Left ventricle myocardium superior (tissue), 1 donor: ENCODE measurements at regions of chr13 and their contacts with region 1.

Region 1: DNA sequence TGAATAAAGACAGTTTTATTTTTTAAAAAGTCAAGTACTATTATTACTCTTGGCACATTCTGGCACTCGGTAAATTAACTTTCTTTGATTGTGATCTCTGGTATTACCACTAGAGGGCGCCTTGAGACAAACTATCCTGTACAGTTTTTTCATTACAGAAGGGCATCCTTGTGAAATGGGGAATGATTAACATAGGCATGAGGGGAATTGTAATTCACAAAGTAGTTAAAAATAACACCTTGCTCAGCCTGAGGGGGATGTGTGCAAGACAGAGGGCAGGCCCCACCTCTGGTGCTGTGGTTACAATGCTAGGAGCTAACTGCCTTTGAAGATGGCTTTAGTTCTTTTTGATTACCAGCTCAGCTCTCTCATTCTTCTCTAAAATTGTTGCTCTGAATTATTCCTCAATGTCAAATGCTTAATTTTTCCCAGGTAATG is 24.2 kb upstream of the C1QTNF9B start:
- DNase-seq: no peak
- ATAC-seq: peak; percentile 33

Region 2: DNA sequence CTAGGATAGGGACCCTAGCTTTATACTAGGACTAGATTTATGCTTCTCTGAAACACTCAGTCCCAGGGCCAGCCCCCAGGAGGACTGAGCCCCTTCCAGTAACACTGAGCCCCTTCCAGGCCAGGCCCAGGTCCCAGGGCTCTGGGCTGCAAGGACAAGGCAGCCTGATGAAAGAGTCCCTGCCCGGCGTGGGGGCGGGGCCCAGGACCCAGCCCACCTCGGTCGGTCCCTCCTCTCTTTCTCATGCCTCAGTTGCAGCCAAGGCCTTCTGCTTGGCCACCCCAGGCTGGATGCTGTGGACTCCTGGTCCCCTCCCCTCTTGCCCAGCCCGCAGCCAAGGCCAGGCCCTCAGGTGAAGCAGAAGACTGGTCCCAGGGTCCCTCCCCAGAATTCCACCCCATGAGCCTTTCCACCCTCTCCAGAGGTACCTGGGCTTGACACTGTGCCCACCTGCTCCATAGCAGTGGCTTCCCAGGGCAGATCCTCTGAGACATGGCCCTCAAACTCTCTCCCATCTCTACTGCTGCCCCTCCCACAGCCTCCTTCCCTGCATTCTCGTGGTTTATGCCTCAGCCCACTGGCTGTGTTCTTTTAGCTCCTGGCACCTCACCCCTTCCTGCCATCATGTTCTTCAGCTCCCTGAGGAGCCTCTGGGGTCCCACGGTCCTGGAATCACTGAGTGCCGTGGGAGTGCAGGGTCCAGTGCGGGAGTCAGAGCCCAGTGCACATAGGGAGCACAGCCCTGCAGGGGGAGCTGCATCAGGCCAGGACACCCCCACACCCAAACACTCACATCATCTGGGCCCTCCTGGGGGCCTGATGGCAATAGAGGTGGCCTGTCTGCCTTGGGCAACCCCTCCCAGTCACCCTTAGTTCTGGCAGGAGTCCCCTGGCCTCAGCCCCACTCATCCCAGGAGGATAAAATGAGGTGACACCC is 29.5 kb after region 1 on chr13:
- intact Hi-C with region 1: no loop called
- DNase-seq: no peak
- ATAC-seq: no peak

Region 3: DNA sequence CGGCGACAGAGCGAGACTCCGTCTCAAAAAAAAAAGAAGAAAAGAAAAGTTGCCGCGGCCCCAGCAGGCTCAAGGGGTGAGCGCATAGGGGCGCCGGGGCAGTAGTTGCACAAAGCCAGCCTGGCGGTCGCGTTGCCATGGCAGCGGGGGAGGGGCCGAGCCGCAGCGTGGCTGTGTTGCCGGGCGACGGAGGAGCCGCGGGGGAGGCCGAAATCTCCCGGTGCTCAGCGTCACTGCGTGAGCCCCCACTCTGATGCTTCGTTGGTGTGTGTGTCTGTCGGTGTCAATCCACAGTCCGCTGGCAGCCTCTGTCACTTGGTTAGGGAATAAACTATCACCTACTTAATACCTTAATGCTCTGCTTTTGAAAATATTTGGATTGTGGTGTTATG is 58.7 kb after region 1 on chr13:
- intact Hi-C with region 1: no loop called
- DNase-seq: peak; percentile 92
- ATAC-seq: peak; percentile 95

Region 4: GRCh38 chr13:24020375-24020830 is 98.9 kb after region 1 on chr13:
- intact Hi-C with region 1: loop called (anchors 1 kb)
- DNase-seq: peak; percentile 42
- ATAC-seq: no peak

Region 5: GRCh38 chr13:24083722-24084421 is 162.4 kb after region 1 on chr13:
- intact Hi-C with region 1: no loop called
- DNase-seq: no peak
- ATAC-seq: no peak

Region 6: GRCh38 chr13:24228852-24229458 is 307.5 kb after region 1 on chr13:
- intact Hi-C with region 1: loop called (anchors 5 kb)
- DNase-seq: no peak
- ATAC-seq: peak; percentile 25